Posterior vena cava (tissue), 2 donors: ENCODE measurements at regions of chr6 and their contacts with region 1.

Region 1: DNA sequence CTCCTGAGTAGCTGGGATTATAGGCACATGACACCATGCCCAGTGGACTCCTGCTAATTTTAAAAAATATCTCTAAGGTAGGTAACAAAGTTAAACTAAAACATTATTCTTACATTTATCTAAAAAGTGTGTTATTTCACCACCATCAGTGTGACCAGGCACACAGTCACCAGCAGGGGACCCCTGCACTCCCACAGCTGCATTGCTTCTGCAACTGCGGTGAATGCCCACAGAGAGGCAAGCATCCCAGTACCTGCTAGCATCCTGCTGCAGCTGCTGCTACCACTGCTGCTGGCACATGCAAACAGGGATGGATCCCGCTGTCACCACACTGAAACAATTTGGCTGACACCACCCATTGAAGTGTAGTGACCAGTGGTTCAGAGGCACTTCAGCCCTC is 21.9 kb upstream of the EPB41L2 start:
- DNase-seq: no peak

Region 2: DNA sequence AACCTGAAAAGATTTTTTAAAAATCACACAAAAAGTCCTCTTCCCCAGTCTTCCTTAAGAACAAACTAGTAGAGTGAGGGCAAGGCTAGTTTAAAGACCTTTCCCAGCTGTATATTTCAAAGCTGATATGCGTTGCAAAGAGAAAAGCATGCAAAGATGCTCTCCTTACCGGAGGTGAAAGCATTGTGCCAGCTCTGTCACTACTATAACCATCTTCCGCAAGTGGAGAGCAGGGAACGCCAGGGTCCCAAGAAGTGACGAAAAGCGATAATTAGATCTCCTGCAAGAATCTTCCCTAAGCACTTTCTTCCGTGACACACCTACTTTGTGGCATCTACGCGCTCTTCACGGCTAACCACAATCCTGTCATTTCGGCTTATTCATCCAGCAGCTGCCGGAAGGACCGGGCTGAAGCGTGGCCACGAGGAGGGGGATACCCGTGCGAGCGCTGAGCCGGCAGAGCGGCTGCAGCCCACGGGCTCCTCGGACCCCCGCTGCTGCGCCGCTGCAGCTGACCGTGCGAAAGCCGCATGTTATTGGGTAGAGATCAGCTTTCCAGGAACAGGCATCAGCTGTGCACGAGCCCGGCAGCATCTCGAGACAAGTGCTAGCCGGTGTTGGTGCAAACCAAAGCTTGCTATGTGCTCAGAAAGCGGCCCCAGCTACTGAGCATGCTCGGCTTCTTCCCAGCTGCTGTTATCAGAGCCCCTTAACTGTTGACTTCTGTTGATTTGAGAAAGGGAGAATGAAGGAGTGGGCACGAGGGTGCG is 1317.8 kb before region 1 on chr6:
- intact Hi-C with region 1: loop called in 1 of 2 experiments (anchors 10 kb)
- DNase-seq: peak; percentile 80